Mammary epithelial cell (primary cell): ENCODE measurements at regions of chr4 and their contacts with region 1.

Region 1: GRCh38 chr4:169791527-169792156 is 33.9 kb upstream of the HPF1 start:
- DNase-seq: peak; percentile 65
- H3K4me3 ChIP-seq: peak overlapping the region; percentile 37 to 50 (median 42)
- H3K27ac ChIP-seq: no peak overlapping the region
- H3K4me1 ChIP-seq: peaks cover 9% of the 10 kb centered on the region
- H3K27me3 ChIP-seq: no peaks in the 10 kb centered on the region
- CTCF ChIP-seq: peak; percentile 49 to 59

Region 2: DNA sequence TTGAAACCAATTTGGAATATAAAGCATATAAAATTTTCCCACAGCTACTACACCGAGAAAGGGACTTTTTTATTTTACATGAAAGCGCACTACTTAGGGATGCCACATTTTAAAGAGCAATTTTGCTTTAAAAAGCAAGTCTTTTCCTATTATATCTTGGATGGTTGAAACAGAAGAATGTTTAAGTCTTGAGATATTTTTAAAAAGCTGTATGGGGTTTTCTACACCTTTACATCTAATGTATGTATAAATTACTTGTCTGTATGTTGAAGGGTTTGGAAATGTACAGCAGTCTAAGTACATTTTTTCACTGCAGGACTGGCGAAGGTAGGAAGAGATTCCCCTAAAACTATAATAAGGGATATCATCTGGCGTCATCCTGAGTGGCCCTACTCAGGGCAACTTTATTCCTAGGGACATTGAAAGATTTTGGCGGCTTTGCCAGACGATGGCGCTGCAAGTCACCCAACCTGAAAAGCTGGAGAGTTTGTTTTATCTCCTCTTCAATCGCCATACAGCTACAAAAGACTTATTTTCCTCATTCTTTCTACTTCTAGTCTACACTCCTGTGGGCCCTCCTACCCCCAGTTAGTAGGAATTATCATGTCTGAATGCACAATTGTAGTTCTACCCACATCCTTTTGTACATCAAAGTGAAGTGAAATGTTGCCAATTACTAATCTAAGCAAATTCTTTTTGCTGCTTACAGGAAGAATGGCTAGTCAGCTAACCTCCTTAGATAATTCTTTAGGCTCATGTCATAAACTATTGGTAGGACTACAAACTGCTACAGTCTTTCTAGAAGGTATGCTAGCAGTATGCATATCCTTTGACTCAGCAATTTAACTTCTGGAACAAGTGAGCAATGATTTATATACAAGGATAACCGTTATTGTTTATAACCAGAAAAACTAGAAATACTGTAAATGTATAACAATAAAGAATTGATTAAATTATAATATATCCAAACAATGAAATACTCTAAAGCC is 178.5 kb before region 1 on chr4:
- CTCF ChIA-PET with region 1: no interaction called
- dilution Hi-C with region 1: no loop called
- in situ Hi-C with region 1: no loop called
- intact Hi-C with region 1: loop called (anchors 2 kb)
- DNase-seq: peak; percentile 71
- H3K4me3 ChIP-seq: peak overlapping the region; percentile 66 to 99 (median 82)
- H3K27ac ChIP-seq: peak overlapping the region; percentile 74
- H3K4me1 ChIP-seq: peaks cover 11% of the 10 kb centered on the region
- H3K27me3 ChIP-seq: no peaks in the 10 kb centered on the region
- CTCF ChIP-seq: peak; percentile 74 to 79

Region 3: GRCh38 chr4:169659716-169660670 is 131.6 kb before region 1 on chr4:
- CTCF ChIA-PET with region 1: no interaction called
- dilution Hi-C with region 1: no loop called
- in situ Hi-C with region 1: no loop called
- intact Hi-C with region 1: loop called (anchors 5 kb)
- DNase-seq: peak; percentile 98
- H3K4me3 ChIP-seq: peak overlapping the region; percentile 50 to 73 (median 69)
- H3K27ac ChIP-seq: peak overlapping the region; percentile 99
- H3K4me1 ChIP-seq: peaks cover 13% of the 10 kb centered on the region
- H3K27me3 ChIP-seq: no peaks in the 10 kb centered on the region
- CTCF ChIP-seq: no peak

Region 4: GRCh38 chr4:170027181-170027829 is 235.7 kb after region 1 on chr4:
- CTCF ChIA-PET with region 1: no interaction called
- dilution Hi-C with region 1: no loop called
- in situ Hi-C with region 1: no loop called
- intact Hi-C with region 1: loop called (anchors 1 kb)
- DNase-seq: peak; percentile 96
- H3K4me3 ChIP-seq: peak overlapping the region; percentile 69 to 98 (median 78)
- H3K27ac ChIP-seq: peak overlapping the region; percentile 77
- H3K4me1 ChIP-seq: peaks cover 14% of the 10 kb centered on the region
- H3K27me3 ChIP-seq: no peaks in the 10 kb centered on the region
- CTCF ChIP-seq: no peak

Region 5: DNA sequence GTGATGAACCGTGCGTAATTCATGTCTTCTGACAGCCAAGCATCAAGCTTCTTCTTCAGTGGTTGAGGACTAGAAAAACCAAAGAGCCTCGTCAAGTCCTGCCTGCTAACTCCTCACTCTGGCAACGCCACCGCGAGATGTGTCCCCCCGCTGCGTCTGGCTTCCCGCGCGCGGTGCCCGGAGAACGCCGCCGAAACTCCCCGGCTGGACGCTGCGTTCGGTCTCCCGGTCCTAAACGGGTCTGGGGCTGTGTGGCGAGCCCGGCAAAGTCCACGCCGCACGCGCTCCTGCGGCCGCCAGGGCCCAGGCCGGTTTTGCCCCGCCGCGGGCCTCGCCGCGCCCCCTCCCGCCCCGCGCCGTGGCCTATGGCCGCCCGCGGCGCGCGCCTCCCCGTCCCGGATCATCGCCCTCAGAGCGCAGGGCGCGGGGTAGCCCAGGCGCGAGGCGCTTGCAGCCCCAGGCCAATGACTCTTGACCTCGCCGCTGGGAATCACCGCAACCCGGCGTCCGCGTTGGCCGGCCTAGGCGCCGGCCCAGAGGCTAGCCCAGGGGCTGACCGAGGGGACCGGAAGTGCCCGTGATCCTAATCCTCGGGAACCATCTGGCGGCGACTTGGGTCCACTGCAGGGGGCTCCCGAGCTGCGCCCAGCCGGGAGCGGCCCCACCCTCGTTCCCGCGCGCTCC is 298.2 kb after region 1 on chr4 and contains the start of gene AADAT:
- CTCF ChIA-PET with region 1: no interaction called
- dilution Hi-C with region 1: no loop called
- in situ Hi-C with region 1: no loop called
- intact Hi-C with region 1: loop called (anchors 5 kb)
- DNase-seq: peak; percentile 65
- H3K4me3 ChIP-seq: peak within 1 kb of the TSS; percentile 52 to 78 (median 65)
- H3K27ac ChIP-seq: peak within 1 kb of the TSS; percentile 43
- H3K4me1 ChIP-seq: peaks cover 14% of the 10 kb centered on the region
- H3K27me3 ChIP-seq: no peaks in the 10 kb centered on the region
- CTCF ChIP-seq: peak; percentile 52 to 73
- total RNA-seq, gene AADAT: 5.5 to 8.3 TPM